Adrenal gland (tissue), 19 donors: ENCODE measurements at regions of chr9 and their contacts with region 1.

Region 1: DNA sequence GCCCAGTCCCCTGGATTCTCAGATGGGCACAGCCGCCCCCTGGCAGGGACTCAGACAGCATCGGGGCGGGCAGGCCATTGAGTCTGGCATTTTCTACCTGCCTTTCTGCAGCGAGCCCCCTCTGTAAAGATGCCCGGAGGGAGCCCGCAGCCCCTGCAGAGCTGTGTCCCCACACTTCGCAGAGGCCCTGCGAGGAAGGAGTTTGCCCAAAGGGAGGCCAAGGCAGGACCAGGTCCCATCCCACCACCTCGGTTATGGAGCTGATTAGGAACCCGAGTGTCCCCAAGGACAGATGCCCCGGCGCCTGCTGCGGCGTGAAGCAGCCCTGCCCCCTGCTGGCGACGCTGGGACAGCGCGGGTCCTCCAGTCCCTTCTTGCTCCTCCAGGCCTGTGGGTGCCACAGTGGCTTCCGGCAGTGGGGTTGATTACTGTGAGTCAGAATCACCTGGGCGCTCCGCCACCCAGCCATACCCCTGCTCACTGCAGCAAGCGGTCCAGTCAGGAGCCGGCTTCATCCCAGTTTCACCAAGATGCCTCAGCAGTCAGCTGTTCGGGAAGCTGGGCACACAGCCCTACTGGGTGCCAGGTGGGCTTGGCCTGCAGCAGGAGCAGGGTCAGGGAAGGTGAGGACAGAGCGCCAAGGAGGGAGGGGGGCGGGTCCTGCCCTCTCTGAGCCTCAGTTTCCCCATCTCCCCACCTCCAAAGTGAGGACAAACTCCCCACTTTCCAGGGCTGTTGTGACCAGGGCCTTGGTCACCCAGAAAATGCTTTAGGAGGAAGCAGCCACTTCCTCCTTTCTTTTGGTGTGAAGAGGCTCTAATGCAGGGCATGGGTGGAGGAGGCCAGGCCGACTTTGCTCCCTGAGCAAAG is 117.1 kb downstream of the RXRA start:
- DNase-seq: peak; percentile 87 to 96 (median 95)
- H3K4me3 ChIP-seq: no peak overlapping the region
- H3K27ac ChIP-seq: peak overlapping the region in 3 of 5 donors; percentile 38 to 67 (median 62)
- H3K4me1 ChIP-seq: peaks cover 0 to 36% of the 10 kb centered on the region in 2 donors
- H3K27me3 ChIP-seq: no peaks in the 10 kb centered on the region
- CTCF ChIP-seq: peak; percentile 97 to 100 (median 99)
- POLR2A ChIP-seq: peak in 1 of 2 donors; percentile 15

Region 2: DNA sequence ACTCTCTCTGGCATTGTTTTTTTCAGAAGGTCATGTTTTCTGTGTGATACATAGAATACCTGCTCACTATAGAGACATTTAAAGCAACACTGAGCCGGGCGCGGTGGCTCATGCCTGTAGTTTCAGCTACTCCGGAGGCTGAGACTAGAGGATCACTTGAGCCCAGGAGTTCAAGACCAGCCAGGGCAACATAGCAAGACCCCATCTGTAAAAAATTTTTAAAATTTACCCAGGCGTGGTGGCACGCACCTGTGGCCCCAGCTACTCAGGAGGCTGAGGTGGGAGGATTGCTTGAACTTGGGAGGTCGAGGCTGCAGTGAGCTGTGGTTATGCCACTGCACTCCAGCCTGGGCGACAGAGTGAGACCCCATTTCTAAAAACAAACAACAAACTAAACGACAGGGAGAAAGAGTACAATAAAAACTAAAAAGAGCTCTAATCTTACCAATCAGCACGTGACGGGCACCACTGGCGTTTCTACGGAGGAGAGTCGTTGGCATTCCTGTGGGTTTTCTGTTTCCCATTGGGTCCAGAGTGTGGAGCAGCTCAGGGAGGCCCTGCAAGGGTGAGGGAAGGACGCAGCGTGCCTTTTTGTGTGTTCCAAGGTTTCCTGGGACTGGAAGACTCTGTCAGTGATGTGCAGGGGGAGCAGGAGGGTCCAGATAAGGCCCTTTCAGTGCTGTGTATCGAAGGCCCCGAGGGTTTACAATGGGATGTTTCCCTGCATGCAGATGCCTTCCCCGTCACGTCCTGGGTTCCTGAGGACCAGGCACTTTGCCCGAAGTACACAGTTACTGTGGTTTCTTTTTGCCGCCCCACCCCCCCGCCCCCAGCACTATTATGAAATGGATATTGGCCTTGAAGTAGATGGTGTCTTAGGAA is 271.8 kb before region 1 on chr9:
- intact Hi-C with region 1: loop called (anchors 2 kb)
- DNase-seq: peak in 6 of 7 donors; percentile 50 to 84 (median 68)
- H3K4me3 ChIP-seq: no peak overlapping the region
- H3K27ac ChIP-seq: peak overlapping the region in 2 of 5 donors; percentile 47 to 70
- H3K4me1 ChIP-seq: peaks cover 9 to 32% of the 10 kb centered on the region in 2 donors
- H3K27me3 ChIP-seq: no peaks in the 10 kb centered on the region
- CTCF ChIP-seq: no peak
- POLR2A ChIP-seq: peak in 1 of 2 donors; percentile 10

Region 3: DNA sequence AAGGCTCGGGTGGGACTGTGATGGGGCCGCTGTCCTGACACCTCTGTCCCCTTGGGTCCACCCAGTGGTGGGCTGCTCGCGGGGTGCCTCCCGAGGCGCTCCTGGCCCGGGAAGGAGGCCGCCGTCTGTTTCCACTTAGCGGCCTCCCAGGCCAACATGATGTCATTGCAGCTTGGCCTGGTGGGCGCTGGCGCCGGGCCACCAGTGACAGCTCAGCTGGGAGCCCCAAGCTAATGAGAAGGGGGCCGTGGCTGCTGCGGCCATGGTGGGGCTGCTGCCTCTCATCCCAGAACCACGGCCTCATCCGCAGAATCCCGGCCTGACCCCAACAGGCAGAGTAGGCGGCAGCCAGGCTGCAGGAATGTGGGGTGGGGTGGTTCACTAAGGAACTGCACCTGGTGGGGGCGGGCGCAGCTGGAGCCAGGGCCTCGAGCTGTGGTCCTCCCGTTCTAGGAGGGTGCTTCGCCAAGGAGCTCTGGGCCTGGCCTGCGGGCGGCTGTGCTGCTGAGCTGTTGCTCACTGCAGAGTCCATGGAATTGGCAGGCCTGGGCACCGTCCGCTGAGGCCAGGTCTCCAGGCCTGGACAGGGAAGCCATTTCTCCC is 74.7 kb after region 1 on chr9:
- intact Hi-C with region 1: no loop called
- DNase-seq: no peak
- H3K4me3 ChIP-seq: no peak overlapping the region
- H3K27ac ChIP-seq: no peak overlapping the region
- H3K4me1 ChIP-seq: no peaks in the 10 kb centered on the region
- H3K27me3 ChIP-seq: no peaks in the 10 kb centered on the region
- CTCF ChIP-seq: no peak
- POLR2A ChIP-seq: no peak

Region 4: GRCh38 chr9:134602547-134603309 is 159.3 kb after region 1 on chr9:
- intact Hi-C with region 1: no loop called
- DNase-seq: peak in 6 of 7 donors; percentile 62 to 82 (median 68)
- H3K4me3 ChIP-seq: no peak overlapping the region
- H3K27ac ChIP-seq: peak overlapping the region in 1 of 5 donors; percentile 56
- H3K4me1 ChIP-seq: no peaks in the 10 kb centered on the region
- H3K27me3 ChIP-seq: no peaks in the 10 kb centered on the region
- CTCF ChIP-seq: no peak
- POLR2A ChIP-seq: no peak

Region 5: DNA sequence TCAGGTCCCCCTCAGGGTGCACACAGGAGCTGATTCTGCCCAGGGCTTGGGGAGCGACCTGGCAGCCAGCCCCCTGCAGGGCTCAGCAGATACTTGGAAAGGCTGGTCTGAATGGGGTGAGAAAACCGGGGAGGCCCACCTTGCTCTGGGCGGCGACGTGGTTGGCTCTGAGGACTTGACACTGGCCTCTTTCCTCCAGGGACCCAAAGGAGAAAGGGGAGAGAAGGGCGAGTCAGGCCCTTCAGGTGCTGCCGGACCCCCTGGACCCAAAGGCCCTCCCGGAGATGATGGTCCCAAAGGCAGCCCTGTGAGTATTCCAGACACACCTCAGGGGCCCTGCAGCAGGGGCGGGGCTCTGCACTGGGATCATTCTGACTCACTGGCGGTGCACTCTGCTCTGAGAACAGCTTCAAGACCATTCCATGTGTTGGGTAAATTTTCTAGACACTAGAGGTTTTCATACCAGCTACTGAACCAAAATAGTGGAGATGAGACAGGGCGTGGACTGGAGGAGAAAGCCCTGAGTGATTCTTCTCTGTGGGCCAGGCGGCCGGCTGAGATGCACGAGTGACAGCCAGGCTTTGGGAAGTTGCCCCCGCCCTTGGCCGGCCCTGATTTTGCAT is 371.3 kb after region 1 on chr9:
- intact Hi-C with region 1: no loop called
- DNase-seq: no peak
- H3K4me3 ChIP-seq: no peak overlapping the region
- H3K27ac ChIP-seq: no peak overlapping the region
- H3K4me1 ChIP-seq: no peaks in the 10 kb centered on the region
- H3K27me3 ChIP-seq: no peaks in the 10 kb centered on the region
- CTCF ChIP-seq: no peak
- POLR2A ChIP-seq: no peak